ENCODE measurements at regions of chr12 and their contacts with region 1.

Region 1: DNA sequence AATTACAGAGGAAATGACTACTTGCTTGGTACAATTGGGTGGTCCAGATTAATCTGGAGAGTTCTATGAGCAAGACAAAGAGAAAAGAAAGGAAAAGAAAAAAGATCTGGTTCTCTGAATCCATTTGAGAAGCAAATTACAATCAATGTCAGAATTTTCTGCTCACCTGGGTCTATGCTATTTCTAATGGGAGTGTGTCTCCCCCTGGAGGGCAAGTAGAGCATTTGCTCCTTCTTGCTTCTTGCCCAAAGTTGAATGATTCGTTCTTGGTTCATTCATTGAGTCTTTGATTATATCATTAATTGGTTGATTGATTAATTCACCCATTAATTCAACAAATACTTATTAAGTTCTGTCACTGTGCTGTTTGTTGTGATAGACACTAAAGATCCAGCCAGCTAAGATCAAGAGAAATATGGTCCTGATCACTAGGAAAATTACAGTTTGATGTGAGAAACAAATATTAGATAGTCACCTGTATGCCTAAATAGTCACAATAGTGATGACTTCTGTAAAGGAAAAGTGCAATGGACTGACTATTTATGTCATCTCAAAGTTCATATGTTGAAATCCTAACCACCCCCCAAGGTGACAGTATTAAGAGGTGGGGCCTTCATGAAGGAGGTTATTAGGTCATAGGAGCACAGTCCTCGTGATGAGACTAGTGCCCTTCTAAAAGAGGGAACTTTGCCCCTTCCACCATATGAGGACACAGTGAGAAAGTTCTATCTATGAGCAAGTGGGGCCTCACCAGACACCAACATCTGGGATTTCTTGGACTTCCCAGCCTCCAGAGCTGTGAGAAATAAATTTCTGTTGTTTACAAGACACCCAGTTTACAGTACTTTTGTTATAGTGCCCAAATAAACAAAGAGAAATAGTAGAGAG is 8.0 kb upstream of the ASB8 start:
- DNase-seq: no peak
- ATAC-seq: peak; percentile 64
- H3K4me3 ChIP-seq: no peak overlapping the region
- H3K27ac ChIP-seq: no peak overlapping the region
- H3K4me1 ChIP-seq: no peaks in the 10 kb centered on the region
- H3K27me3 ChIP-seq: no peaks in the 10 kb centered on the region

Region 2: GRCh38 chr12:47963340-47964040 is 201.8 kb before region 1 on chr12 and contains the start of gene TMEM106C:
- intact Hi-C with region 1: loop called in 1 of 2 experiments (anchors 10 kb)
- DNase-seq: peak; percentile 93 to 98
- ATAC-seq: peak; percentile 96
- H3K4me3 ChIP-seq: peak within 1 kb of the TSS; percentile 75 to 77
- H3K27ac ChIP-seq: peak within 1 kb of the TSS in 1 of 2 donors; percentile 12
- H3K4me1 ChIP-seq: no peaks in the 10 kb centered on the region
- H3K27me3 ChIP-seq: no peaks in the 10 kb centered on the region
- total RNA-seq, gene TMEM106C: 56.3 to 70.0 TPM

Region 3: GRCh38 chr12:48084066-48084465 is 81.3 kb before region 1 on chr12:
- intact Hi-C with region 1: loop called (anchors 2 to 5 kb)
- DNase-seq: no peak
- ATAC-seq: no peak
- H3K4me3 ChIP-seq: no peak overlapping the region
- H3K27ac ChIP-seq: no peak overlapping the region
- H3K4me1 ChIP-seq: no peaks in the 10 kb centered on the region
- H3K27me3 ChIP-seq: no peaks in the 10 kb centered on the region

Region 4: DNA sequence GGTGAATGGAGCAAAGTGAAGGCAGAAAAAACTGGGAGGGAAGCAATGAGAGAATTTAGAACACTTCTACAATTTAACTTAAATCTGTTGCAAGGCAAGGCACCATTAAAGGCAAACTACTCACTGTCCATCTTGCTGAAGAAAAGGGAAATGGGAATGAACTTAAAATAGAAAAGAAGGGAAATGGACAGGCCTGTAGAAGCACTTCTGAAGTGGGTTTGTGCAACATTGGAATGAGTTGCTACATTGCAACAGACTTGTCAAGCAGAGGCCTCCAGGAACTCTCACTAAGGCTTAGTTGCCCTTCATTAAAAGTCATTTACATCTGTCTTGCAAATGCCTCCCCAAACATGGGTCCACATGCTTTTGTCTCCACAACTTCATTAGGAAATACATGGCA is 51.4 kb after region 1 on chr12:
- intact Hi-C with region 1: no loop called
- DNase-seq: no peak
- ATAC-seq: no peak
- H3K4me3 ChIP-seq: no peak overlapping the region
- H3K27ac ChIP-seq: no peak overlapping the region
- H3K4me1 ChIP-seq: no peaks in the 10 kb centered on the region
- H3K27me3 ChIP-seq: no peaks in the 10 kb centered on the region

Measured in aorta (tissue), 5 donors.